Cardiac septum (tissue), 1 donor: ENCODE measurements at regions of chr17 and their contacts with region 1.

Region 1: DNA sequence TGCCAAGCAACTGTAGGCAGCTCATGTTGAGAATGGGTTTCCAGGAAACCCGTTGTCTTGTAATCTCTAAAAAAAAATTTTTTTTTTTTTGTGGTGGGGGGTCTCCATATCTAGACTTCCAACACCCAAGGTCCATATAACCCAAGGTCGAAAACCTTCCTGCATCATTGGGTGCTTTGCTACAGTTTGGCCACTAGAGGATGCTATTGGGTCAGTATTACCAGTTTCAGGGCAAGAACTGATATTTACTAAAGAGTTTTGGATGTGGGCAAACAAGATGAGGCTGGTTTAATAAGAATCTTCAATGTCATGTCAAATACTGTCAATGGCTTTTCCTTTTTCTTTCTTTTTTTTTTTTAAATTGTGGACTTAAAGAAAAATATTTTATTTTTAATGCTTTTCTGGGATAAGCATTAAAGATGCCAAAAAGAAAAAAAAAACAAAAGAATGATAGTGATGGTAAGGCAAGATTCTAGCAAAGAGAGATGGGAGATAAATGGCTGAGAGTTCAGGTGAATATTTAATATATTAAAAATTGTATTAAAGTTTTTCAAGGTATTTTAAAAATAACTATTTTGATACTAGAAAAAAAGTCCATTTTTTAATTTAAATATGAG is 62.2 kb downstream of the DHRS7C start:
- DNase-seq: no peak

Region 2: GRCh38 chr17:9696266-9697027 is 32.7 kb before region 1 on chr17:
- intact Hi-C with region 1: no loop called
- DNase-seq: no peak

Region 3: DNA sequence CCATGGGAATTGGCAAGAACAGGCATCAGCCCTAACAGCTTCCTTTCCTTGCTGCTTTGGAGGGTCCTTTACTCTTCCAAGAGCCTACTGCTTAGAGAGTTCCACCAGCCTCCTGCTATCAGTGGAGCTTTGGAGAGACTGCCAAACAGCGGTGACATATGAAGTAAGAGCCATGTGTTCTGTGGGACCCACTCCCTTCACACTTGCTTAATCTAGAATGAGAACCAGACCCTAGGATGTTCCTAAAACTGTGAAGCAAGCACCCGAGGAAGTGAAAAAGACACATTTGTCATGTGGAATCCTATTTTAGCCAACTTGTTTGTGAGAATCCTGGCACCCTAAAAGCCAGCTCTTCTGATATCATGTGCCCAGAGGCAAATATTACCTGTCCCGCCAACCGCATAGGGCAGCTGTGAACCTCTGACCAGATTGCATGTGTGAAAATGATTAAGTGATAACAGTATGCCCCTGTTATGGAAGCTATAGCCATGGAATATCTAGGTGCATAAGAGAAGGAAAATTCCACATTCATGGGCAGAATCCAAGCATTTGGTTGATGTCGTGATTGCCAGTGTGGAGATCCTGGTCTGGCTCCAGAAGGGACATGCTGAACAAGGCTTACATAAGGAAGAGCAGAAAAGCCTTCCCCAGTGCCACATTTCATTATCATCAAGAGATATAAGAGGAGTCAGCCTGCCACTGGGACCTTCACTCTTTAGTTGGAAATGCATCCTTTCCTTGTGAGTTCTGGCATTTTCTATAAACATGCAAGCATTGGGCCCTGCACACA is 157.2 kb after region 1 on chr17:
- intact Hi-C with region 1: loop called (anchors 5 kb)
- DNase-seq: no peak